MCF 10A (cell line): ENCODE measurements at regions of chr5 and their contacts with region 1.

Region 1: DNA sequence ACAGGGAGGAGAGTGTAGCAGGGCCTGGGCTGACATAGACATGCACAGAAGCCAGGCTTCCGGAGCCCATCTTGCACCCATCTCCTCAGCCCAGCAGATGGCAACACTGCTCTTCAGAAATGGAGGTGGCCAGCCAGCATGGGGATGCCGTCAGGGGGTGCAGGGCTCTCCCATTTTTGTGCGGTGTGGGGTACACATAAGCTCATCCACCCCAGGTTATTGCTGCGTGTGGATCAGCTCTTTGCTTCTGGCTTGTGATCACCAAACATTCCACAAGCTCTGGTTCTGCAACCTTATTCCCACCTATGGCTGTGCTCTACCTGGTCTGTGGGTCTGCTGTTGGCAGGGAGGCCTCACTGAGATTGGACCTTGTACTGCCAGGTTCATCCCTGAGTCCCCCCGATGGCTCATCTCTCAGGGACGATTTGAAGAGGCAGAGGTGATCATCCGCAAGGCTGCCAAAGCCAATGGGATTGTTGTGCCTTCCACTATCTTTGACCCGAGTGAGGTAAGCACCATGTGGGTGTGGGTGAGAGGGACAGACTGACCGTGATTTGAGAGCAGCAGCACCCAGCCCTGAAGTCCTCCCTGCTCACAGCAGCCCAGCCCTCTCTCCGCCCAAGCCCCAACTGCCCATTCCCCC is 17.3 kb downstream of the SLC22A5 start:
- DNase-seq: peak; percentile 87
- H3K4me3 Mint-ChIP-seq: no peak overlapping the region
- H3K27ac Mint-ChIP-seq: peak overlapping the region; percentile 13
- H3K4me1 Mint-ChIP-seq: peaks cover 53% of the 10 kb centered on the region
- H3K27me3 Mint-ChIP-seq: no peaks in the 10 kb centered on the region
- CTCF ChIP-seq: peak; percentile 89

Region 2: GRCh38 chr5:132293066-132293991 is 93.4 kb before region 1 on chr5:
- CTCF ChIA-PET with region 1: interaction called, 7 read pairs
- POLR2A ChIA-PET with region 1: interaction called, 24 read pairs
- intact Hi-C with region 1: loop called (anchors 5 kb)
- DNase-seq: peak; percentile 91
- H3K4me3 Mint-ChIP-seq: peak overlapping the region; percentile 98
- H3K27ac Mint-ChIP-seq: peak overlapping the region; percentile 89
- H3K4me1 Mint-ChIP-seq: peaks cover 40% of the 10 kb centered on the region
- H3K27me3 Mint-ChIP-seq: no peaks in the 10 kb centered on the region
- CTCF ChIP-seq: peak; percentile 19

Region 3: GRCh38 chr5:132410451-132411381 is 24.0 kb after region 1 on chr5:
- CTCF ChIA-PET with region 1: interaction called, 58 read pairs
- POLR2A ChIA-PET with region 1: interaction called, 70 read pairs
- intact Hi-C with region 1: loop called (anchors 1 kb)
- DNase-seq: peak; percentile 78
- H3K4me3 Mint-ChIP-seq: peak overlapping the region; percentile 80
- H3K27ac Mint-ChIP-seq: peak overlapping the region; percentile 93
- H3K4me1 Mint-ChIP-seq: peaks cover 27% of the 10 kb centered on the region
- H3K27me3 Mint-ChIP-seq: no peaks in the 10 kb centered on the region
- CTCF ChIP-seq: peak; percentile 95

Region 4: GRCh38 chr5:132456296-132457001 is 69.7 kb after region 1 on chr5:
- CTCF ChIA-PET with region 1: interaction called, 8 read pairs
- POLR2A ChIA-PET with region 1: interaction called, 10 read pairs
- intact Hi-C with region 1: no loop called
- DNase-seq: no peak
- H3K4me3 Mint-ChIP-seq: no peak overlapping the region
- H3K27ac Mint-ChIP-seq: peak overlapping the region; percentile 60
- H3K4me1 Mint-ChIP-seq: peaks cover 47% of the 10 kb centered on the region
- H3K27me3 Mint-ChIP-seq: no peaks in the 10 kb centered on the region
- CTCF ChIP-seq: no peak

Region 5: GRCh38 chr5:132495667-132496190 is 109.0 kb after region 1 on chr5:
- CTCF ChIA-PET with region 1: interaction called, 359 read pairs
- POLR2A ChIA-PET with region 1: interaction called, 88 read pairs
- intact Hi-C with region 1: no loop called
- DNase-seq: peak; percentile 92
- H3K4me3 Mint-ChIP-seq: peak overlapping the region; percentile 80
- H3K27ac Mint-ChIP-seq: peak overlapping the region; percentile 34
- H3K4me1 Mint-ChIP-seq: peaks cover 47% of the 10 kb centered on the region
- H3K27me3 Mint-ChIP-seq: no peaks in the 10 kb centered on the region
- CTCF ChIP-seq: no peak

Region 6: DNA sequence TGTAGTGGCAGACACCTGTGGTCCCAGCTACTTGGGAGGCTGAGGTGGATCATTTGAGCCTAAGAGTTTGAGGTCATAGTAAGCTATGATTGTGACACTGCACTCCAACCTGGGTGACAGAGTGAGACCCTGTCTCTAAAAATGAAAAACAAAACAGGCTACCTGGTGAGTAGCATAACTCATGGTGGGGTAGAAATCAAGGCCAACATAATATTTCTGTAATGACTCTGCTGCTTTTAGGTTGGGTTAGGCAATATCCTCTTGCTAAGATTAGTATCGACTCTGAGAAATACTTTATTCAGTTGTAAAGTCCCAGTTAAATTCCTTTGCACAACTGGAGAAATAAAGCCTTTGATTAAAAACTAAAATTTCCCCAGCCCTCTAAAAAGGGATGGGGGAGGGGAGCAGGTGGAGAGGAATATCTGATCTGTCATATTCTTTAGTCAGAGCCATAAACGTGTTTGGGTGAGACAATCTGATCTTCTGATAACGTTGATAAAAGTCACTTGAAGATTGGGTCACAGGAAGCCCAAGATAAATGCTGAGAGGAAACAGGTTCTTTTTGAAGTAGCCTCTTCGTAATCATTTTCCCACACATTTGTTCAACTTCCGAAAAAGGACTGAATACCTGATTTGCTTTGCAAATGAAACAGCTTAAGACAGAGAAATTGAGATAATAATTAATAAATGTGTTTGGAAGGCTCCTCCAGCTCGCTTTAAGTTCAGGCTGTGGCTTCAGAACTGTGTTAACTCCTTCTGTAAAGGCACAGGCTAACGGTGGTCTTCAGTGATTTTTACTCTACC is 302.0 kb after region 1 on chr5:
- CTCF ChIA-PET with region 1: no interaction called
- POLR2A ChIA-PET with region 1: no interaction called
- intact Hi-C with region 1: no loop called
- DNase-seq: no peak
- H3K4me3 Mint-ChIP-seq: no peak overlapping the region
- H3K27ac Mint-ChIP-seq: no peak overlapping the region
- H3K4me1 Mint-ChIP-seq: peaks cover 6% of the 10 kb centered on the region
- H3K27me3 Mint-ChIP-seq: no peaks in the 10 kb centered on the region
- CTCF ChIP-seq: no peak

Region 7: DNA sequence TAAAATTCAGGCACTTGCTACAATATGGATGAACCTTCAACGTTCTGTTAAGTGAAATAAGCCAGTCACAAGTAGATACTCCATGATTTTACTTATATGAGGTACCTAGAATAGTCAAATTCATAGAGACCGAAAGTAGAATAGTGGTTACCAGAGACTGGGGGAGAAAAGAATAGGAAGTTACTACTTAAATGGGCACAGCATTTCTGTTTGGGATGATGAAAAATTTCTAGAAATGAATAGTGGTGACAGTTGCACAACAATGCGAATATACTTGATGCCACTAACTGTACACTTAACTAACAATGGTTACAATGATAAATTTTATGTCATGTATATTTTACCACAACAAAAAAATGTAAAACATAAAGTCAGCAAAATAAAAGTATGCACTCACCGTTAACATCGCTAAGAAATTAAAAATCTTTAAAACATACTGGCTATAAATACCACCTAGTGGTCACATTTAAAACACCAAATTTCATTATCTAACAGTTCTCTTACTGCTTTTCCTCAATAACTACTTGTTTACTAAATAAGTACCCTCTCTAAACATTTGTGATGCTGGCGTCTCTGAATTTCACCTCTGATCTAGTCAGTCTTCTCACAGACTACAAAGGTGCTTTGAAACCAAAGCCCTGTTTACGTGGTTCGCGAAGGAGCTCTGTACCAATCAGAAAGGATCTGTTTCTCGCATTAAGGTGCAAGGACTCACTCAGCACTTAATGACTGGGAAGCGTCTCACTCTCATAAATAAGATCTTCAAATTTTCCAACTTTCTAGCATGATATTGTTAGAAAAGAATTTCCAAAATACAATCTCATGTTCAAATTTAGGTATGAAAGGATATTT is 327.9 kb after region 1 on chr5:
- CTCF ChIA-PET with region 1: interaction called, 3 read pairs
- POLR2A ChIA-PET with region 1: no interaction called
- intact Hi-C with region 1: loop called (anchors 10 kb)
- DNase-seq: no peak
- H3K4me3 Mint-ChIP-seq: no peak overlapping the region
- H3K27ac Mint-ChIP-seq: no peak overlapping the region
- H3K4me1 Mint-ChIP-seq: no peaks in the 10 kb centered on the region
- H3K27me3 Mint-ChIP-seq: no peaks in the 10 kb centered on the region
- CTCF ChIP-seq: peak; percentile 50